ENCODE measurements at regions of chr13 and their contacts with region 1.

Region 1: GRCh38 chr13:44237276-44237767 is 136.3 kb upstream of the SERP2 start:
- DNase-seq: peak; percentile 32 to 90
- ATAC-seq: peak; percentile 97 to 99 (median 98)
- H3K4me3 ChIP-seq: peak overlapping the region in 1 of 10 donors; percentile 14
- H3K27ac ChIP-seq: peak overlapping the region; percentile 71 to 94 (median 88)
- H3K4me1 ChIP-seq: peaks cover 20 to 40% (median 32%) of the 10 kb centered on the region in 9 donors
- H3K27me3 ChIP-seq: no peaks in the 10 kb centered on the region
- CTCF ChIP-seq: no peak

Region 2: DNA sequence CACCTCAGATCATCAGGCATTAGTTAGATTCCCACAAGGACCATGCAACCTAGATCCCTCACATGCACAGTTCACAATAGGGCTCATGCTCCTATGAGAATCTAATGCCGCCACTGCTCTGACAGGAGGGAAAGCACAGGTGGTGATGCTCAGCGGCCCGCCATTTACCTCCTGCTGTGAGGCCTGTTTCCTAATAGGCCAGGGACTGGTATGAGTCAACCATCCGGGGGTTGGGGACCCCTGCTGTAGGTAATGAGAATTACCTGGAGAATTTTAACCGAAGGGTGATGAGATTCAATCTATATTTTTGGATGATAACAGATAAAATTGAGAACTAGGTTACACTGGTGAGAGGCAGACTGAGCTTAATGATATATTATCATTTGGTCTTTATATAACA is 256.2 kb before region 1 on chr13:
- intact Hi-C with region 1: no loop called
- DNase-seq: no peak
- ATAC-seq: peak in 1 of 8 donors; percentile 27
- H3K4me3 ChIP-seq: no peak overlapping the region
- H3K27ac ChIP-seq: peak overlapping the region in 1 of 10 donors; percentile 46
- H3K4me1 ChIP-seq: peaks cover 0 to 17% (median 7%) of the 10 kb centered on the region in 9 donors
- H3K27me3 ChIP-seq: no peaks in the 10 kb centered on the region
- CTCF ChIP-seq: no peak

Region 3: GRCh38 chr13:44108331-44108858 is 128.9 kb before region 1 on chr13:
- intact Hi-C with region 1: loop called in 1 of 10 experiments (anchors 5 kb)
- DNase-seq: peak; percentile 53 to 54
- ATAC-seq: peak; percentile 56 to 95 (median 78)
- H3K4me3 ChIP-seq: no peak overlapping the region
- H3K27ac ChIP-seq: peak overlapping the region; percentile 56 to 80 (median 72)
- H3K4me1 ChIP-seq: peaks cover 14 to 80% (median 42%) of the 10 kb centered on the region in 9 donors
- H3K27me3 ChIP-seq: no peaks in the 10 kb centered on the region
- CTCF ChIP-seq: no peak

Region 4: GRCh38 chr13:44141725-44142539 is 95.4 kb before region 1 on chr13:
- intact Hi-C with region 1: loop called in 1 of 10 experiments (anchors 10 kb)
- DNase-seq: peak; percentile 98 to 99
- ATAC-seq: peak; percentile 99 to 100 (median 100)
- H3K4me3 ChIP-seq: peak overlapping the region; percentile 50 to 79 (median 58)
- H3K27ac ChIP-seq: peak overlapping the region; percentile 91 to 99 (median 96)
- H3K4me1 ChIP-seq: peaks cover 5 to 22% (median 10%) of the 10 kb centered on the region in 9 donors
- H3K27me3 ChIP-seq: no peaks in the 10 kb centered on the region
- CTCF ChIP-seq: peak in 2 of 9 donors; percentile 9 to 21

Region 5: DNA sequence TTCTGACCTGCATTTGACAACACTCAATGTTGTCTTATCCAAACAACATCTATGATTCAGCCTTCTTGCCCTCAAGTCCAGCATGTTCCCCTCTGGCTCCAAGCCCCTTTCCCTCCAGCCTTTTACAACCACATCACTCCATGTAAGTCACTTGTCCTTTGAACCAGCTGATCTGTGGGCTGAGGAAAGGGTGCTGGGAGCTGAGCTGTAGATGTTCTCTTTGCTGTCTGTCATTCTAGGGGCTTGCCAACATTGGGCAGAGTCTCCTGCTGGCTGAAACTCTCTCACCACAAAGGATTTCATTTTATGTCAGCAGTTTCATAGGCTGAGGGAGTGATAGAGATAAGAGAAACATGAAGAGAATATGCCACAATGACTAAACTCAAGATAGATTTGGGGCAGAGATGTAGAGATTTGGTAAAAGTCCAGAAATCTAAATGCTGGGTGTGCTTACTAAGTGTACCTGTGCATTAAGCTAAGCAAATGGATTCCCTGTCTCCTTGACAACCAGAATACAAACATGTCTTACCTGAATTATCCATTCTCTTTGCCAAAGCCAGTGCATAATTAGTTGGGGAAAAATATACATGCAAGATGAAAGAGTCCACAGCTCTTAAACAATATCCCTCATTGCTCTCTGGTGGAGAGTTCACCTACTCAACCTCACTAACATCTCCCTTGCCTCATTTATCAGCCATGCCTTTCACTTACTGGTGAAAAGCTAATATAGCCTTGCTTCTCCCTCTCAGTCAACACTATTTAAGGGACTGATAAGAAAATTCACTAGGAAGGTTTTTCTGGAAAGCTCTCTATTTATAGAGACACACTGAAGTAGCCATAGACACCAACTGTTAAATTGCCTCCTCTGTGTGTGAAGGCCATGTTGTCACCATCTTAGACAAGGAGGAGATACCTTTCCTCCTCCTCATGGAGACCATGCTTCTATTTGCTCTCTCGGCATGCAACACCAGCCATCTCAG is 39.2 kb before region 1 on chr13:
- intact Hi-C with region 1: loop called in 5 of 10 experiments (anchors 2 to 5 kb)
- DNase-seq: no peak
- ATAC-seq: peak in 5 of 8 donors; percentile 16 to 56 (median 41)
- H3K4me3 ChIP-seq: no peak overlapping the region
- H3K27ac ChIP-seq: peak overlapping the region in 1 of 10 donors; percentile 0
- H3K4me1 ChIP-seq: peaks cover 0 to 25% (median 5%) of the 10 kb centered on the region in 9 donors
- H3K27me3 ChIP-seq: no peaks in the 10 kb centered on the region
- CTCF ChIP-seq: no peak

Region 6: DNA sequence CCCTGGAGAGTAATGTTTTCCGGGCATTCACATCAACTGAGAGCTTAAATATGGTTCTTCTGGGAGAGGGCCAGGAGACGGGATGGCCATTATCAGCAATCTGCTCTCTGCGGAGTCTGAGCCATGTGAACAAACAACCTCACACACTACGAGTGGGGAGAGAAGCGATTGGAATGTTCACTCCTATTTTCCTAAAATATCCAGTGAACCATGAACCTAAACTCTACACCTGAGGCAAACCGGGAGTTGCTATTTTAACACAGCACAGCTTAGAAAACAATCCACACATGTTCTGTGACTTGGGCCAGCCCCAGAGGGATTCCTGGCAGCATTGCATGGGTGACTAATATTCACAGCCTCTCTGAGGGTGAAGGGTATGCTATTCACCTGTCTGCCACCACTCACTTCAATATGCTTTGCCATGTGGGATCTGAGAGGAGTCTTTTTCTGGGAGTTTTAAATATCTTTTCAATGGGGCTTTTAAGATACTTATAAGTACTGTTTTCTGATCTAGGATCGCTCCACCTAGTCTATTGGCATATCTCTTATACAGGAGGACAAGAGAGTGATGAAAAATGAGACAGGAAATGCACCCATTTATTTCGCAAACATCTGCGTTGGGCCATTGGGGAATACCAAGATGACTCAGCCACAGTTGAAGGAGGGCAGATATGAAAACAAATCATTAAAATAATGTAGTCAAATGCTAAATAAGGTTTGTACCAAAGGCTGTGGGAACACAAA is 63.7 kb after region 1 on chr13:
- intact Hi-C with region 1: loop called in 3 of 10 experiments (anchors 2 to 5 kb)
- DNase-seq: peak in 1 of 2 donors; percentile 74
- ATAC-seq: peak; percentile 54 to 92 (median 84)
- H3K4me3 ChIP-seq: no peak overlapping the region
- H3K27ac ChIP-seq: peak overlapping the region; percentile 12 to 82 (median 70)
- H3K4me1 ChIP-seq: peaks cover 9 to 78% (median 55%) of the 10 kb centered on the region in 9 donors
- H3K27me3 ChIP-seq: no peaks in the 10 kb centered on the region
- CTCF ChIP-seq: no peak

Region 7: GRCh38 chr13:44967704-44968451 is 730.6 kb after region 1 on chr13:
- intact Hi-C with region 1: no loop called
- DNase-seq: no peak
- ATAC-seq: no peak
- H3K4me3 ChIP-seq: no peak overlapping the region
- H3K27ac ChIP-seq: no peak overlapping the region
- H3K4me1 ChIP-seq: peaks cover 0 to 13% (median 4%) of the 10 kb centered on the region in 9 donors
- H3K27me3 ChIP-seq: no peaks in the 10 kb centered on the region
- CTCF ChIP-seq: peak in 2 of 9 donors; percentile 14 to 28

Measured in heart right ventricle (tissue), 16 donors.